ENCODE measurements at regions of chr3 and their contacts with region 1.

Region 1: GRCh38 chr3:30511524-30512278 is 94.7 kb upstream of the TGFBR2 start:
- DNase-seq: no peak
- H3K4me3 ChIP-seq: no peak overlapping the region
- H3K27ac ChIP-seq: peak overlapping the region; percentile 64
- H3K4me1 ChIP-seq: peaks cover 19% of the 10 kb centered on the region
- H3K27me3 ChIP-seq: no peaks in the 10 kb centered on the region
- CTCF ChIP-seq: no peak

Region 2: GRCh38 chr3:30586096-30586805 is 74.5 kb after region 1 on chr3:
- intact Hi-C with region 1: loop called (anchors 10 kb)
- DNase-seq: no peak
- H3K4me3 ChIP-seq: no peak overlapping the region
- H3K27ac ChIP-seq: peak overlapping the region; percentile 66
- H3K4me1 ChIP-seq: peaks cover 21% of the 10 kb centered on the region
- H3K27me3 ChIP-seq: no peaks in the 10 kb centered on the region
- CTCF ChIP-seq: no peak

Region 3: GRCh38 chr3:30606301-30607031 is 94.8 kb after region 1 on chr3 and contains the start of gene TGFBR2:
- intact Hi-C with region 1: no loop called
- DNase-seq: peak; percentile 96
- H3K4me3 ChIP-seq: peak within 1 kb of the TSS; percentile 92
- H3K27ac ChIP-seq: peak within 1 kb of the TSS; percentile 99
- H3K4me1 ChIP-seq: peaks cover 70% of the 10 kb centered on the region
- H3K27me3 ChIP-seq: no peaks in the 10 kb centered on the region
- CTCF ChIP-seq: peak; percentile 48
- total RNA-seq, gene TGFBR2: 144 TPM

Region 4: DNA sequence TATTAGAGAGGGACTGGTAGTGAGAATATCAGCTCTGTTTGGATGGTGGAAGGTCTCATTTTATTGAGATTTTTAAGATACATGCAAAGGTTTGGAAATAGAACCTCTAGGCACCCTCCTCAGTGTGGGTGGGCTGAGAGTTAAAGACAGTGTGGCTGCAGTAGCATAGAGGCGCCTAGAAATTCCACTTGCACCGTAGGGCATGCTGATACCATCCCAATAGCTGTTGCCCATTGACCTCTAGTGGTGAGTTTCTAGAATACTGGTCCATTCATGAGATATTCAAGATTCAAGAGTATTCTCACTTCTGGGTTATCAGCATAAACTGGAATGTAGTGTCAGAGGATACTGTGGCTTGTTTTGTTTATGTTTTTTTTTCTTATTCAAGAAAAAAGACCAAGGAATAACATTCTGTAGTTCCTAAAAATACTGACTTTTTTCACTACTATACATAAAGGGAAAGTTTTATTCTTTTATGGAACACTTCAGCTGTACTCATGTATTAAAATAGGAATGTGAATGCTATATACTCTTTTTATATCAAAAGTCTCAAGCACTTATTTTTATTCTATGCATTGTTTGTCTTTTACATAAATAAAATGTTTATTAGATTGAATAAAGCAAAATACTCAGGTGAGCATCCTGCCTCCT is 181.9 kb after region 1 on chr3:
- intact Hi-C with region 1: loop called (anchors 10 kb)
- DNase-seq: no peak
- H3K4me3 ChIP-seq: no peak overlapping the region
- H3K27ac ChIP-seq: peak overlapping the region; percentile 79
- H3K4me1 ChIP-seq: peaks cover 89% of the 10 kb centered on the region
- H3K27me3 ChIP-seq: no peaks in the 10 kb centered on the region
- CTCF ChIP-seq: peak; percentile 90

Region 5: DNA sequence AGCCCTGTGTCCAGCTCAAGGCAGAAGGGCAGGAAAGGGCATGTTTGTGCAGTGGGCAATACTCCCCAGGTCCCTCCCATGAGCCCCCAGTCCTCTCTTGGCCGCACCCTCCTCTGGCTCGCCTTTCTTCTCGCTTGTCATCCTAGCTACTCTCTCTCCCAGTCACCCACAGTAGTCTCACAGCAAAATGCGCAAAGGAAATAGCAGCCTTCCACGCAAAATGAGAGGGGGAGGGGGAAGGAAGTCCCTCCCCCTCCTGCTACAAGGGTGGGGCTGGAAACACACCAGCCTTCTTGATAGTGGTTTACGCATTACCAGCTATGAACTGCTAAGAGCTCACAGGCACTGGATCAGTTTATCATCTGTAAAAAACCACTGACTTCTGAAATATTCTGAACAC is 298.9 kb after region 1 on chr3:
- intact Hi-C with region 1: no loop called
- DNase-seq: peak; percentile 12
- H3K4me3 ChIP-seq: peak overlapping the region; percentile 38
- H3K27ac ChIP-seq: peak overlapping the region; percentile 73
- H3K4me1 ChIP-seq: peaks cover 20% of the 10 kb centered on the region
- H3K27me3 ChIP-seq: no peaks in the 10 kb centered on the region
- CTCF ChIP-seq: no peak

Measured in left ventricle myocardium inferior (tissue), 1 donor.